ENCODE measurements at regions of chr13 and their contacts with region 1.

Region 1: GRCh38 chr13:42271337-42272114 is 426 bp upstream of the AKAP11 start:
- DNase-seq: peak; percentile 85
- ATAC-seq: peak; percentile 83
- H3K4me3 Mint-ChIP-seq: peak overlapping the region; percentile 97
- H3K27ac Mint-ChIP-seq: peak overlapping the region; percentile 97
- H3K4me1 Mint-ChIP-seq: peaks cover 54% of the 10 kb centered on the region
- H3K27me3 Mint-ChIP-seq: no peaks in the 10 kb centered on the region
- CTCF ChIP-seq: no peak

Region 2: DNA sequence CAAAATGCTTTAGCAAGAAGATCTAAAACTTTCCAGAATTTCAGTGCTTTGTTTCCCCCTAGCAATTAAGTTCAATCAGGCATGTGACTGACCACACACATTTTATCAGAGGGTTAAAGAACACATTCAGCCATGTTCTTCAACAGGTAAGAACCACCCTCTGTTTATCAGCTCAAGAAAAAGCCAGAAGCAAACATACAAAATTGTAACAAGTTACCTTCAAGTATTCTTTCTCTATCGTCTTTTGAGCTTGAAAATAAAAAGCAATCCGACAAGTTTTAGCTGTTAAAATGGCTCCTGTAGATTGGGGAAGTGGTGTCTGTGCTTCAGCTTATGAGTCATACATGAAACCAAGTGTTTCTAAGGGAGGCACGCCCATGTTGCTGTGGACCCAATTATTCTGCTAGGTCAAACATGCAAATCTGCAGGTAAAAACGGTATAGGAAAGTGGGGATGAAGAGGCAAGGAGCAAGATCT is 1252.5 kb before region 1 on chr13 and contains the start of gene ELF1:
- CTCF ChIA-PET with region 1: no interaction called
- POLR2A ChIA-PET with region 1: interaction called, 5 read pairs
- intact Hi-C with region 1: loop called (anchors 10 kb)
- DNase-seq: peak; percentile 26
- ATAC-seq: peak; percentile 87
- H3K4me3 Mint-ChIP-seq: peak within 1 kb of the TSS; percentile 94
- H3K27ac Mint-ChIP-seq: peak within 1 kb of the TSS; percentile 99
- H3K4me1 Mint-ChIP-seq: peaks cover 46% of the 10 kb centered on the region
- H3K27me3 Mint-ChIP-seq: no peaks in the 10 kb centered on the region
- CTCF ChIP-seq: no peak
- total RNA-seq, gene ELF1: 129 and 136 TPM in 2 replicates

Region 3: GRCh38 chr13:41263261-41264027 is 1008.1 kb before region 1 on chr13 and contains the start of gene MTRF1:
- CTCF ChIA-PET with region 1: no interaction called
- POLR2A ChIA-PET with region 1: no interaction called
- intact Hi-C with region 1: loop called (anchors 2 kb)
- DNase-seq: peak; percentile 72
- ATAC-seq: peak; percentile 93
- H3K4me3 Mint-ChIP-seq: peak within 1 kb of the TSS; percentile 96
- H3K27ac Mint-ChIP-seq: peak within 1 kb of the TSS; percentile 99
- H3K4me1 Mint-ChIP-seq: peaks cover 17% of the 10 kb centered on the region
- H3K27me3 Mint-ChIP-seq: no peaks in the 10 kb centered on the region
- CTCF ChIP-seq: no peak
- total RNA-seq, gene MTRF1: 22.2 and 26.7 TPM in 2 replicates

Region 4: DNA sequence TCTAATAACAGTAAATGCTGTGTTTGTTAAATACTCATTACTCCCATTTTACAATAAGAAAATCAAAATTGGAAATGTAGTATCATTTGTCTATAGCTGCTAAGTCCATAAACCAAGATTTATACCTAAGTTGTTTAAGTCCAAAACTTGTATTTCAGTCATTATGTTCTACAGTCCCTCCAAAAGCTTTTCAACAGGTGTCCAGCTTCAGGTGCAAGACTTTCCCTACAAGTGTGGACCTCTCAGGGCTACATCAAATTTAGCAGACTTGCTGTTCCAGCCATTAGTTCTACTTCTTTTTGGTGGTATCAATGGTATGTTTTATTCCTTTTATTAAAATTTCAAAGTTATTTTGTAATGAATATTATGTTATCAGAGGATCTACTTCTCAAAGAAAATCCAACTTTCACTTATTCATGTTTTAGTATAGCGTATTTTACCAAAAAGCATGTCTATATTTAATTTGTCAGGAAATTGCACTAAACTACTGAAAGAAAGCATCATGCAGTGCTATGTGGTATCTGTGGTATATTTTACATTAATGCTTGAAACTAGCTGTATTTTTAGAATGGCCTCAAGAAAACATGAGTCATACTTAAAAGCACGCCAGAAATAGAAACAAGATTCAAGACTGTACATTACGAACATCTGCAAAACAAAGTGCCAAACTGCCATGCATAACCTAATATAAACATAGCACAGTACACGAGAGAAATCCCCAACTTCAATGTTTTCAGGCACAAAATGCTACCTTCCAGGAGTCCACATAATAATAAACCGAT is 355.2 kb before region 1 on chr13:
- CTCF ChIA-PET with region 1: no interaction called
- POLR2A ChIA-PET with region 1: no interaction called
- intact Hi-C with region 1: loop called (anchors 5 kb)
- DNase-seq: no peak
- ATAC-seq: peak; percentile 89
- H3K4me3 Mint-ChIP-seq: peak overlapping the region; percentile 39
- H3K27ac Mint-ChIP-seq: peak overlapping the region; percentile 13
- H3K4me1 Mint-ChIP-seq: peaks cover 32% of the 10 kb centered on the region
- H3K27me3 Mint-ChIP-seq: no peaks in the 10 kb centered on the region
- CTCF ChIP-seq: no peak

Region 5: DNA sequence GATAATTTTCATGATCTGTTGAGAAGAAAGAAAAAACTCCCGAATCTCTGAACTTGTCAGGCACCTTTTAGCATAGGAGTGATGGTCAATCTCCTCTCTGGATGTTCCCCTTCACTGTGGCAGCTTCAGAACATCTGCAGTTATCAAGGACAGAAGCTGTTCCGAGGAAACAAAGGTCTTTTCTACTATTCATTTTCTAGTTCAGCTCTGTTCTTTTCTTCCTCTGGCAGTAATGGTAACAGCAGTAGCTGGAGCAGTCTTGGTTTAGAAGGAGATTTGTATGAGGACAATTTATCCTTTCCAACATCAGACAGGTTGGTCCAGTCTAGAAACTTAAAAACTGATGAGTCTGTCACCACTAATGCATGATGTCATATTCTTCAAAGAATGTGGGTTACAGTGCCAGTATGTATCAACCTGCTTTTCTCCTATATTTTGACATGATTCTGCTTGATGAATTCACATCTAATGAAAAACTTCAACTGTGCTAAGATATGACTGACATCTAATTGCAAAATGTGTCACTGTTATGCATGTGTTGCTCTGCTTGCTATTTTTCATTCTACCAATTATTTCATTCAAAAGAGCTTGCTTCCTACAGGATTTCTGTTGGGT is 41.4 kb after region 1 on chr13:
- CTCF ChIA-PET with region 1: no interaction called
- POLR2A ChIA-PET with region 1: no interaction called
- intact Hi-C with region 1: loop called (anchors 5 kb)
- DNase-seq: no peak
- ATAC-seq: no peak
- H3K4me3 Mint-ChIP-seq: no peak overlapping the region
- H3K27ac Mint-ChIP-seq: peak overlapping the region; percentile 11
- H3K4me1 Mint-ChIP-seq: peaks cover 5% of the 10 kb centered on the region
- H3K27me3 Mint-ChIP-seq: no peaks in the 10 kb centered on the region
- CTCF ChIP-seq: no peak

Region 6: DNA sequence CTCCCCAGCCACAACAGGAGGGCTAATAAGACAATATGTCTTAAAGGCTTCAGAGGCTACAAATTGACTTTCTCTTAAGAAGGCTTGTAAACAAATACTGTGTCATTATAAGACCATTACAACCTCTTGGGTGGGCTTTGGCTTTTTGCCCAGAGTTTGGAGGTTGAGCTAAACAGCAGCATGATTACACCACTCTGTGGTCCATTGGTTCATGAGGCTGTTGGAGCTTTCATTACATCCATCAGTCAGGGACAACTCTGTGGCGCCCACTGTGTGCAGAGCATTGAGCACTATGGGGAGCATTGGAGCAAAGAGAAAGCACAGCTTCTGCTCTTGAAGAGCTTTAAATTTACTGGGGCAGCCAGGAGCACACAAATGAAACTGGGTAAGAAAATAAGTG is 378.3 kb after region 1 on chr13:
- CTCF ChIA-PET with region 1: no interaction called
- POLR2A ChIA-PET with region 1: no interaction called
- intact Hi-C with region 1: no loop called
- DNase-seq: no peak
- ATAC-seq: no peak
- H3K4me3 Mint-ChIP-seq: no peak overlapping the region
- H3K27ac Mint-ChIP-seq: no peak overlapping the region
- H3K4me1 Mint-ChIP-seq: no peaks in the 10 kb centered on the region
- H3K27me3 Mint-ChIP-seq: no peaks in the 10 kb centered on the region
- CTCF ChIP-seq: no peak

Region 7: GRCh38 chr13:43878892-43879754 is 1607.6 kb after region 1 on chr13 and contains the start of gene CCDC122:
- CTCF ChIA-PET with region 1: no interaction called
- POLR2A ChIA-PET with region 1: interaction called, 3 read pairs
- intact Hi-C with region 1: loop called (anchors 5 kb)
- DNase-seq: peak; percentile 83
- ATAC-seq: peak; percentile 86
- H3K4me3 Mint-ChIP-seq: peak within 1 kb of the TSS; percentile 93
- H3K27ac Mint-ChIP-seq: peak within 1 kb of the TSS; percentile 93
- H3K4me1 Mint-ChIP-seq: peaks cover 32% of the 10 kb centered on the region
- H3K27me3 Mint-ChIP-seq: no peaks in the 10 kb centered on the region
- CTCF ChIP-seq: no peak
- total RNA-seq, gene CCDC122: 7.1 and 8.0 TPM in 2 replicates

Measured in activated B cell treated with CpG ODN at 0.5 μM for 24 hours (primary cell).